Activated T-helper 1 cell treated with anti-CD3 and anti-CD28 coated beads, Interleukin-12 subunit alpha, Interleukin-12 subunit beta, Interleukin-2, Interleukin-4 antibody, amounts not matched to agents 30 ng/mL and 10 ng/mL and 1 ng/mL, durations not matched to agents 14 hours and 24 hours and 36 hours (primary cell): ENCODE measurements at regions of chr9 and their contacts with region 1.

Region 1: GRCh38 chr9:4994166-4994890 is 9.3 kb downstream of the JAK2 start:
- DNase-seq: no peak
- H3K4me3 Mint-ChIP-seq: no peak overlapping the region
- H3K27ac Mint-ChIP-seq: peak overlapping the region; percentile 15
- H3K4me1 Mint-ChIP-seq: peaks cover 24% of the 10 kb centered on the region
- H3K27me3 Mint-ChIP-seq: no peaks in the 10 kb centered on the region

Region 2: GRCh38 chr9:3698076-3698475 is 1296.3 kb before region 1 on chr9:
- intact Hi-C with region 1: no loop called
- DNase-seq: no peak
- H3K4me3 Mint-ChIP-seq: no peak overlapping the region
- H3K27ac Mint-ChIP-seq: no peak overlapping the region
- H3K4me1 Mint-ChIP-seq: no peaks in the 10 kb centered on the region
- H3K27me3 Mint-ChIP-seq: peaks cover 8% of the 10 kb centered on the region

Region 3: GRCh38 chr9:5013374-5013773 is 19.0 kb after region 1 on chr9:
- intact Hi-C with region 1: loop called (anchors 2 kb)
- DNase-seq: no peak
- H3K4me3 Mint-ChIP-seq: no peak overlapping the region
- H3K27ac Mint-ChIP-seq: no peak overlapping the region
- H3K4me1 Mint-ChIP-seq: peaks cover 43% of the 10 kb centered on the region
- H3K27me3 Mint-ChIP-seq: no peaks in the 10 kb centered on the region

Region 4: GRCh38 chr9:5025416-5025815 is 31.1 kb after region 1 on chr9:
- intact Hi-C with region 1: no loop called
- DNase-seq: no peak
- H3K4me3 Mint-ChIP-seq: no peak overlapping the region
- H3K27ac Mint-ChIP-seq: peak overlapping the region; percentile 46
- H3K4me1 Mint-ChIP-seq: peaks cover 66% of the 10 kb centered on the region
- H3K27me3 Mint-ChIP-seq: no peaks in the 10 kb centered on the region

Region 5: DNA sequence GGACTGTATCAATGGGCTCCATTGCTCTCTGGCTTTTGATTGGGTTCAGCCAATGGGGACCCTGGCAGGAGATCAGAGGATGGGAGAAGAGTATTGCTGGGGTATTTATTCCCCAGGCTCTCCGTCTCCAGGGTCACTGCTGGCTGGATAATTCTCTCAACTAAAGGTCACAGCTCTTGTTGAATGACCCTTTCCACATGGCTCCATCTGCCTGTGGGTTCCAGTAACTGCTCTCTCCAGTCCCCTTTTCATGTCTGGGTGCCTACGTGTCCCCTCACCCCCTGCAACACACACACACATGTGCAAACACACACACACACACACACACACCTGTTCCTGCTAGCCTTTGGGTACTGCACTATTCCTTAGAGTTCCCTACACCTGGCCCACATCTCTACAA is 580.7 kb after region 1 on chr9:
- intact Hi-C with region 1: no loop called
- DNase-seq: no peak
- H3K4me3 Mint-ChIP-seq: no peak overlapping the region
- H3K27ac Mint-ChIP-seq: no peak overlapping the region
- H3K4me1 Mint-ChIP-seq: peaks cover 27% of the 10 kb centered on the region
- H3K27me3 Mint-ChIP-seq: no peaks in the 10 kb centered on the region